A549 (cell line): ENCODE measurements at regions of chr17 and their contacts with region 1.

Region 1: DNA sequence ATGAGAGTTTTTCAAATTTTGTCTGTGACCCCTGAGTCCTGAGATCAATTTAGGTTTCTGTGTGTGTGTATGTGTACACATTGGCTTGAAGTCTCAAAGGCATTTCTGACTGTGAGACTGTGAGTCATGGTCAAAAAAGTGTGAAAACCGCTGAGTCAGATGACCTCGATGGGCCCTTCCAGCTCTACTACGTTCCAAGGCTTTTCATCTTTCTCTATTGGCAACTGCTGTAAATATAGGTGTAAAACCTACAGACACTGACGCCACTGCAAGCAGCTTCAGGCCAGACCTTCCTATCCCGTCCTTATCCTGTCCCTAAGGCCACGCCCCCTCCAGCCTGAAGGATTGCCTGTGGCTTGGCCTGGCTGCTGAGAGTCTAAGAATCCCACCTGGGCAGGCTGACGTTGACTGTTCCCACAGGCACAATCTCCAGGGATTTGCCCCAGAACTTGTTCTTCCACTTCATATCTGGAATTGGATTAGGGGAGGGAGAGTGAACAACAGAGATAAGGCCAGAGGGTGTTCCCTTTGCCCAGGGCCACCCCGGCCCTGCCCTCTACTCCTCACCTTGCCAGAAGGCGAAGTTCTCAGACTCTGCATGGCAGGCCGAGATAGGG is 11.3 kb downstream of the OSBPL7 start:
- DNase-seq: peak; percentile 75 to 88
- ATAC-seq: peak; percentile 69 to 85
- H3K4me3 ChIP-seq: no peak overlapping the region
- H3K27ac ChIP-seq: peak overlapping the region; percentile 36 to 75; a peak in 4 of 6 replicates
- H3K4me1 ChIP-seq: peaks cover 25% of the 10 kb centered on the region
- CTCF ChIP-seq: no peak
- EP300 ChIP-seq: 0 out of 5 replicates have a peak, but pooled peaks of 1 of the 2 experiments have one; percentile 16
- POLR2A ChIP-seq: no peak
- RAD21 ChIP-seq: no peak

Region 2: GRCh38 chr17:47821424-47822391 is 11.4 kb after region 1 on chr17 and contains the start of gene OSBPL7:
- CTCF ChIA-PET with region 1: interaction called, 11 read pairs
- POLR2A ChIA-PET with region 1: interaction called, 6 read pairs
- DNase-seq: peak; percentile 74 to 79
- ATAC-seq: peak; percentile 80 to 92
- H3K4me3 ChIP-seq: peak within 1 kb of the TSS; percentile 77
- H3K27ac ChIP-seq: peak within 1 kb of the TSS; percentile 77 to 85
- H3K4me1 ChIP-seq: peaks cover 21% of the 10 kb centered on the region
- CTCF ChIP-seq: peak; percentile 58
- EP300 ChIP-seq: no peak
- POLR2A ChIP-seq: peak; percentile 81
- RAD21 ChIP-seq: no peak
- polyA plus RNA-seq, gene OSBPL7: 7.0 and 7.1 TPM in 2 replicates

Region 3: DNA sequence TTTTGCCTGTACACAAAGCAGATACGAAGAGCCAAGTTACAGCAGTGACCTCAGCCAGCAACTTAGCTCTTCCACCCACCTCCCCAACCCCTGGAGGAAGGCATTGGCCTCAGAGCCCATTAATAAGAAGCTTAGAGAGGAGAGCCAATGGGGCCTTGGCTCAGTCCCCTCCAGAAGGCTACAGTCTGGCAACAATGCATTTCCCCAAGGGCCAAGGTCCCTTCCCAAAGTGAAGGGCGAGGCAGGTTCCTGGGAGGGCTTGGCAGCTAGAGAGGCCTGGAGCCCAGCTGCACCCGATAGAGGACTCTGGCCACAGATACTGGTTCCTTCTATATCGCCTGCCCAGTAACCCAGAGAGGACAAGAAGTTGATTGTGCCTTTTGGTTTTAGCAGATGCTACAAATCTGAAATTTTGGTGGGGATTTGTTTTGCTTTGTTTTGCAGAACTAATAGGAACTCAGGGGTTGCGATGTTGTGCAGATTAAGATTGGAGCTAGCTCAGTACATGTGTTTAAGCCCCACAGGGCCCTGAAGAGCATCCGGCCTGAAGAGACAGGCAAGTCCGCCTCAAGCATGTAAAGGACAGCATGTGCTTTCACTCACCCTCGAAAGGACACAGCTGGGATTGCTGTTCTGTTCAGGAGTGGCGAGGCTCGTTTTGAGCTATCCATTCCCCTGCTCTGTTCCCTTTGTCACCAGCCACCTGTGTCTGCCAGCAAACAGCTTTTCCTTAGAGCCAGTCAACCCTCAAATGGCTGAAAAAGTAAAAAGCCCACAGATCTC is 119.1 kb after region 1 on chr17:
- CTCF ChIA-PET with region 1: no interaction called
- POLR2A ChIA-PET with region 1: no interaction called
- DNase-seq: no peak
- ATAC-seq: no peak; a peak in 1 of 6 replicates
- H3K4me3 ChIP-seq: no peak overlapping the region
- H3K27ac ChIP-seq: peak overlapping the region in 1 of 2 experiments; percentile 4; a peak in 1 of 6 replicates
- H3K4me1 ChIP-seq: peaks cover 2% of the 10 kb centered on the region; the same call in 1 of the 3 replicates
- CTCF ChIP-seq: no peak
- EP300 ChIP-seq: no peak
- POLR2A ChIP-seq: no peak
- RAD21 ChIP-seq: no peak